Activated CD8-positive, alpha-beta T cell treated with anti-CD3 and anti-CD28 coated beads, Interleukin-2, amount 10 ng/mL, durations not matched to agents 7 days and 5 days (primary cell): ENCODE measurements at regions of chr17 and their contacts with region 1.

Region 1: DNA sequence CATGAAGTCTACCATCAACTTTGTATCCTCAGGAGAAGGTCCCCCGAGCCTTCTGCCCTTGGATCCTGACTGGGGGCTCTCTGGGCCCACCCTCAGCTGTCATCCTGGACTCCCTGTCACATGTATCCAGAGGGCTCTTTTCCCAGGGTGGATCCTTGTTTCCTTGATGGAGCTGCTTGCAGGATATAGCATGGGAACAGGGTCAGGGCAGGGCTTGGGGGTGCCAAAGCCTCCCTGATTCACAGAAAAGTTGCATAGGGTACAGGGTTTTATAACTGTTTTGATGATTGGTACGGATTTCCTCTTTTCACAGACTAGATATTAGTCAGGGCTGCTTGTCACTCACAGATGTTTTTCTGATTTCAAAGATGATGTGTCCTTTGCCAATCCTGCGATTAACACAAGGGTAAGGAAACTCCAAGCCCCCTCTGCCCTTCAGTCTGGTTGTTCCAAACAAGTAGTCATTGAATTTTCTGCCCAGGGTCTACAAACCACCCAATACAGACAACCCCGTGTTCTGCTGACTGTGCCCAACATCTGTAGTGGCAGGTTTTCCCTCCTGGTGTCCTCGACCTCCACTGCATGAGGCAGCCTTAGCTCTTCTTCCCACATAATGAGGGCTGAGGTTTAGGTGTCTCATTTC is 20.6 kb upstream of the SLC35G3 start:
- DNase-seq: peak; percentile 51
- ATAC-seq: peak; percentile 43
- H3K4me3 Mint-ChIP-seq: peak overlapping the region; percentile 69
- H3K27ac Mint-ChIP-seq: peak overlapping the region; percentile 96
- H3K4me1 Mint-ChIP-seq: peaks cover 86% of the 10 kb centered on the region
- H3K27me3 Mint-ChIP-seq: no peaks in the 10 kb centered on the region

Region 2: GRCh38 chr17:35189291-35189690 is 25.5 kb before region 1 on chr17:
- CTCF ChIA-PET with region 1: interaction called, 7 read pairs
- POLR2A ChIA-PET with region 1: interaction called, 38 read pairs
- DNase-seq: peak; percentile 7
- ATAC-seq: no peak
- H3K4me3 Mint-ChIP-seq: peak overlapping the region; percentile 58
- H3K27ac Mint-ChIP-seq: no peak overlapping the region
- H3K4me1 Mint-ChIP-seq: peaks cover 55% of the 10 kb centered on the region
- H3K27me3 Mint-ChIP-seq: no peaks in the 10 kb centered on the region

Region 3: GRCh38 chr17:35235917-35236316 is 21.2 kb after region 1 on chr17:
- CTCF ChIA-PET with region 1: interaction called, 89 read pairs
- POLR2A ChIA-PET with region 1: interaction called, 335 read pairs
- DNase-seq: no peak
- ATAC-seq: peak; percentile 40
- H3K4me3 Mint-ChIP-seq: no peak overlapping the region
- H3K27ac Mint-ChIP-seq: peak overlapping the region; percentile 58
- H3K4me1 Mint-ChIP-seq: peaks cover 61% of the 10 kb centered on the region
- H3K27me3 Mint-ChIP-seq: no peaks in the 10 kb centered on the region

Region 4: DNA sequence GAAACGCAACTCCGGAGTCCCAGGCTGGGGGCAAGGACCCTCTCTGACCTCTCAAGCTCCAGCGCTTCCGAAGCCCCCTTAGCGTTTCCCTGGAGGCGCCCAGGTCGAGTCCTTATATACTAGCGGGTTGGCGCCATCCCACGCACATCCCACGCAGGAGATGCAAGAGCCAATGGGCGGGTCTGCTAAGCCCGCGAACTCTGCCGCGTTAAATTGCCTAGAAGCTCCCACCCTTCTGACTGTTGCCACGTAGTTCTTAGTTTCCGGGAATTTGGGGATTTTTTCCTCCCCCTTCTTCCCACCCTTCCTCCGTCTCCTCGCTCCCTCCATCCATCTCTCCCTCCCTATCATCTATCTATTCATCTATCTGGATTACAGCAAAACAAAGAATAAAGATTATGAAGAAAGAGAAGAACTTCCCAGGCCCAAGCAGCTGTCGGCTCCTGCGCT is 158.8 kb after region 1 on chr17 and contains the start of gene SLFN11:
- CTCF ChIA-PET with region 1: no interaction called
- POLR2A ChIA-PET with region 1: interaction called, 15 read pairs
- DNase-seq: peak; percentile 86
- ATAC-seq: peak; percentile 81
- H3K4me3 Mint-ChIP-seq: peak within 1 kb of the TSS; percentile 99
- H3K27ac Mint-ChIP-seq: peak within 1 kb of the TSS; percentile 98
- H3K4me1 Mint-ChIP-seq: peaks cover 57% of the 10 kb centered on the region
- H3K27me3 Mint-ChIP-seq: peaks cover 3% of the 10 kb centered on the region
- total RNA-seq, gene SLFN11: 40.0 to 50.1 TPM

Region 5: DNA sequence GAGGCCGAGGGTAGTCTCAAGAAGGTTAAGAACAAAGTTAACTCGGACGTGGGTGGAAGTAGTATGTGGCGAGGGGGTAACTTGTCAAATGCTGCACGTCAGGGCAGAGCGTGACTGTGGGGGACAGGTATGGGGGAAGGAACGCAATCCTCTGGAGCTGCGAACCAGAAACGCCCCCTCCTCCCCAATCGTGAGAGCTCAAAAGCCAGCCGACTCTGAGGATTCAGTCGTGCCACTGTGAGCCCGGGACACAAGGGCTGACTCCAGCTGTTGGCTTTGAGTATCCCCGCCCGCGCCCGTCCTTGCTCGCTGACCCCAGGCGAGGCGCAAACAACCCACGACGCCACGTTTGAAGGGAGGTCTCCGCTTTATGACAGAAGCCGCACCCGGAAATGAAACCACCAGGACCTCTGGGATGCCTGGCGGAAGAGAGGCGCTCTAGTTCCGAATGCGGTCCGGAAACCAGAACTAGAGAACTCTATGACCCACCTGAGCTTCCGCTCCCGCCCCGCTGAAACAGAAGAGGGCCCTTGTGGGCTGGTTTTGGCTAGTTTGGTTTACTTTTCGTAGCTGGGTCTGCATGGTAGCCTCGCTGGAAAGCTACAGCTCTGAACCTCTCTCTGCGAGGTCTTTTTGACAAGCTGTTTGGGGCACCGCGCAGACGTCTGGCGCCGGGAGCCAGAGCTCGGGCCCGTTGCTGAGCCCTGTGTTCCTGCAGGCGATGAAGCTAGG is 363.6 kb after region 1 on chr17 and contains the start of gene PEX12:
- CTCF ChIA-PET with region 1: interaction called, 4 read pairs
- POLR2A ChIA-PET with region 1: interaction called, 10 read pairs
- DNase-seq: peak; percentile 94
- ATAC-seq: peak; percentile 96
- H3K4me3 Mint-ChIP-seq: peak within 1 kb of the TSS; percentile 93
- H3K27ac Mint-ChIP-seq: peak within 1 kb of the TSS; percentile 96
- H3K4me1 Mint-ChIP-seq: peaks cover 28% of the 10 kb centered on the region
- H3K27me3 Mint-ChIP-seq: peaks cover under 1% of the 10 kb centered on the region
- total RNA-seq, gene PEX12: 4.0 to 4.1 TPM